Head of caudate nucleus (tissue), 42 donors: ENCODE measurements at regions of chr11 and their contacts with region 1.

Region 1: GRCh38 chr11:12680246-12680939 is 6.2 kb downstream of the TEAD1 start:
- DNase-seq: peak; percentile 72 to 94 (median 88)

Region 2: GRCh38 chr11:12724301-12725046 is 44.1 kb after region 1 on chr11:
- intact Hi-C with region 1: no loop called
- DNase-seq: peak in 25 of 42 donors; percentile 8 to 75 (median 31)

Region 3: GRCh38 chr11:12813371-12814225 is 133.2 kb after region 1 on chr11:
- intact Hi-C with region 1: loop called (anchors 10 kb)
- DNase-seq: no peak